Psoas muscle (tissue), 8 donors: ENCODE measurements at regions of chr10 and their contacts with region 1.

Region 1: GRCh38 chr10:60367431-60367830 is 22.2 kb downstream of the ANK3 start:
- DNase-seq: no peak
- ATAC-seq: no peak
- H3K4me3 ChIP-seq: no peak overlapping the region
- H3K27ac ChIP-seq: no peak overlapping the region
- H3K4me1 ChIP-seq: no peaks in the 10 kb centered on the region
- H3K27me3 ChIP-seq: no peaks in the 10 kb centered on the region
- CTCF ChIP-seq: no peak

Region 2: DNA sequence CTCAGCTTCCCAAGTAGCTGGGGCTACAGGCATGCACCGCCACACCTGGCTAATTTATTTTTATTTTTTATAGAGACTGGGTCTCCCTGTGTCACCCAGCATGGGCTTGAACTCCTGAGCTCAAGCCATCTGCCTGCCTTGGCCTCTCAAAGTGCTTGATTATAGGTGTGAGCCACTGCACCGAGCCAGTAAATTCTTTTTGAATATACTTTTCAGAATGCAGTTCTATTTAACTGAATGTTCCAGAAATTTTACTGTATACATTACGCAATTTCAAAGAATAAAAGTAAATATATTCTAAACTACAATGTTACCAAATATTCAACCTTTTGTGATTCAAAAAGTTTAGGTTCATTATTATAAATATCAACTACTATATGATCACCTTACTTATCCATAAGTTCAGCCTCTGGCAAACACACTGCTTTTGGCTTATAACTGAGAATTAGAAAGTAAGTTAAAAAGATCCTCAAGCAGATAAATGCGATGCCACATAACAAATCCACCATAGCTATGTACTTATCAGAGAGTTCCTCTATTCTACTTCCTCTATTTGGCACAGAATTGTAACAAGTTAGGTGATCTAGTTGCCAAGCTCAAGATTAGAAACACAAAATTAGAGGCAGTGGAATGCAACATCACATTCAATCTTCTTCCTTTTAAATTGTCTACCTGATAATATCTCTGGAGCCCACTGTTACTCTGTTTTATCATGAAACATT is 96.0 kb before region 1 on chr10:
- intact Hi-C with region 1: loop called in 1 of 2 experiments (anchors 10 kb)
- DNase-seq: no peak
- ATAC-seq: no peak
- H3K4me3 ChIP-seq: no peak overlapping the region
- H3K27ac ChIP-seq: no peak overlapping the region
- H3K4me1 ChIP-seq: peaks cover 6% of the 10 kb centered on the region
- H3K27me3 ChIP-seq: no peaks in the 10 kb centered on the region
- CTCF ChIP-seq: no peak

Region 3: DNA sequence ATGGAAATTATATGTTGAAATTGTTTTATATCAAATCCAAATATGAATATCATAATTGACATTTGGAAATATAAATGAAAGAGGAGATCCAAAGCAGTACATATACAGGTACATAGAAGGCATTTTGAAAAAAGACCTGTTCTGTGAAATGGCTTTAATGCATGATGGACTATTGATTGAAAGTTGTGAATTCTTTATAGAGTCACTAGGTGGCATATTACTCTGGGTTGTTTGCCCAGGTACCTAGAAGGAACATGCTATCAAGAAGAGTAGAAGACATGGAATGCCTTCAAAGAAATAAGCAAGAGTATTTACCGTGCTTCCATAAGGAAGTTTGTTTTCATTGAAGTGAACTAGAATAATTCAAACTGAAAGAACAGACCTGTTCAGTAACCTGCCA is 182.3 kb after region 1 on chr10:
- intact Hi-C with region 1: no loop called
- DNase-seq: no peak
- ATAC-seq: peak in 3 of 4 donors; percentile 55 to 84 (median 67)
- H3K4me3 ChIP-seq: no peak overlapping the region
- H3K27ac ChIP-seq: no peak overlapping the region
- H3K4me1 ChIP-seq: no peaks in the 10 kb centered on the region
- H3K27me3 ChIP-seq: no peaks in the 10 kb centered on the region
- CTCF ChIP-seq: peak; percentile 59